Caco-2 (cell line): ENCODE measurements at regions of chr1 and their contacts with region 1.

Region 1: GRCh38 chr1:218345673-218346390 is 696 bp downstream of the TGFB2 start:
- DNase-seq: peak; percentile 63 to 66
- H3K4me3 ChIP-seq: peak overlapping the region; percentile 81
- H3K4me3 Mint-ChIP-seq: no peak overlapping the region
- H3K27ac Mint-ChIP-seq: no peak overlapping the region
- H3K4me1 ChIP-seq: peaks cover 14% of the 10 kb centered on the region
- H3K4me1 Mint-ChIP-seq: peaks cover 6% of the 10 kb centered on the region
- H3K27me3 ChIP-seq: no peaks in the 10 kb centered on the region
- H3K27me3 Mint-ChIP-seq: no peaks in the 10 kb centered on the region
- CTCF ChIP-seq: no peak

Region 2: GRCh38 chr1:218250492-218250891 is 95.3 kb before region 1 on chr1:
- CTCF ChIA-PET with region 1: no interaction called
- POLR2A ChIA-PET with region 1: no interaction called
- intact Hi-C with region 1: no loop called
- DNase-seq: no peak
- H3K4me3 ChIP-seq: no peak overlapping the region
- H3K4me3 Mint-ChIP-seq: no peak overlapping the region
- H3K27ac Mint-ChIP-seq: no peak overlapping the region
- H3K4me1 ChIP-seq: no peaks in the 10 kb centered on the region
- H3K4me1 Mint-ChIP-seq: no peaks in the 10 kb centered on the region
- H3K27me3 ChIP-seq: no peaks in the 10 kb centered on the region
- H3K27me3 Mint-ChIP-seq: peaks cover 23% of the 10 kb centered on the region
- CTCF ChIP-seq: no peak

Region 3: GRCh38 chr1:218299416-218299815 is 46.4 kb before region 1 on chr1:
- CTCF ChIA-PET with region 1: no interaction called
- POLR2A ChIA-PET with region 1: no interaction called
- intact Hi-C with region 1: loop called (anchors 5 kb)
- DNase-seq: peak in 1 of 2 experiments; percentile 37
- H3K4me3 ChIP-seq: no peak overlapping the region
- H3K4me3 Mint-ChIP-seq: no peak overlapping the region
- H3K27ac Mint-ChIP-seq: no peak overlapping the region
- H3K4me1 ChIP-seq: peaks cover 65% of the 10 kb centered on the region
- H3K4me1 Mint-ChIP-seq: peaks cover 36% of the 10 kb centered on the region
- H3K27me3 ChIP-seq: no peaks in the 10 kb centered on the region
- H3K27me3 Mint-ChIP-seq: no peaks in the 10 kb centered on the region
- CTCF ChIP-seq: peak; percentile 22 to 50

Region 4: GRCh38 chr1:218369688-218370511 is 24.1 kb after region 1 on chr1:
- CTCF ChIA-PET with region 1: no interaction called
- POLR2A ChIA-PET with region 1: interaction called, 4 read pairs
- intact Hi-C with region 1: loop called (anchors 1 kb)
- DNase-seq: peak in 1 of 2 experiments; percentile 27
- H3K4me3 ChIP-seq: no peak overlapping the region
- H3K4me3 Mint-ChIP-seq: peak overlapping the region; percentile 37
- H3K27ac Mint-ChIP-seq: peak overlapping the region; percentile 88
- H3K4me1 ChIP-seq: peaks cover 85% of the 10 kb centered on the region
- H3K4me1 Mint-ChIP-seq: peaks cover 29% of the 10 kb centered on the region
- H3K27me3 ChIP-seq: no peaks in the 10 kb centered on the region
- H3K27me3 Mint-ChIP-seq: no peaks in the 10 kb centered on the region
- CTCF ChIP-seq: no peak

Region 5: DNA sequence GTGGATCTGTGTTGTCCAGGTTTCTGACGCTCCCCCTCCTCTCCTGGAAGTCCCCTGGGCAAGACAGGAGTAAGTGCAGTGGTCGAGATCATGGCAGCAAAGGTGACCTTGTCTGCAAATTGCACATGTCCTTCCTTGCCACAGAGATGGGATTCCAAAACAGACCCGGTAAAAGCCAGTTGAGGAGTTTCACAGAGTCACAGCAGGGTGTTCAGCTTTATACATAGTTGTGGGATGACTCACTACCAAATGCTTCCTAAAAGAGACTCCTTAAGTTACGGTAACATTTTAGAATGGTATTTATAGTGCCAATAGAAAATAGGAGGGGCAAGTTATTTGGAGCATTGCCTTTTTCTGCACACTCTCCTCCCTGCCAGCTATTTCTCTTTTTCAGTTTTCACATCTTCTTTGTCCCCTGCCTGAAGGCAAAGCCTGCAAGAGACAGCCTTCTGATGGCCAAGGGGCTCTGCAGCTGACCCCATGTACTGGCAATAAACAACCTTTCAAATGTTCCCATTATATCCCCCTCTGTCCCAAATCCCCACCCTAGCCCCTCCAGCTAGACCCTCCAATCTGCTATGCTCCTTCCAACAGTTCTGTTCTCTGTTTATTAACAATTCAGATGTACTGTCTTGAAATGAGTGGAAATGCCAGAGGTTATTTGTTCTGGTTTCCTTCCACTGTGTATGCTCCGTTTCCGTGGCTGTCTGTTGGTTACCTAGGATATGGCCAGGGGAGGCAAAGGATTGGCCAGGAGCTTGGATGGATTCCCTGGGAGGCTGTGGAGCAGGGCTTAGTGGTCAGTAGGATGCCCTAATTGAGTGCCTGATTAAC is 114.3 kb after region 1 on chr1:
- CTCF ChIA-PET with region 1: no interaction called
- POLR2A ChIA-PET with region 1: no interaction called
- intact Hi-C with region 1: loop called (anchors 5 kb)
- DNase-seq: peak; percentile 35 to 45
- H3K4me3 ChIP-seq: no peak overlapping the region
- H3K4me3 Mint-ChIP-seq: peak overlapping the region; percentile 4
- H3K27ac Mint-ChIP-seq: peak overlapping the region; percentile 71
- H3K4me1 ChIP-seq: peaks cover 29% of the 10 kb centered on the region
- H3K4me1 Mint-ChIP-seq: peaks cover 35% of the 10 kb centered on the region
- H3K27me3 ChIP-seq: no peaks in the 10 kb centered on the region
- H3K27me3 Mint-ChIP-seq: no peaks in the 10 kb centered on the region
- CTCF ChIP-seq: no peak

Region 6: DNA sequence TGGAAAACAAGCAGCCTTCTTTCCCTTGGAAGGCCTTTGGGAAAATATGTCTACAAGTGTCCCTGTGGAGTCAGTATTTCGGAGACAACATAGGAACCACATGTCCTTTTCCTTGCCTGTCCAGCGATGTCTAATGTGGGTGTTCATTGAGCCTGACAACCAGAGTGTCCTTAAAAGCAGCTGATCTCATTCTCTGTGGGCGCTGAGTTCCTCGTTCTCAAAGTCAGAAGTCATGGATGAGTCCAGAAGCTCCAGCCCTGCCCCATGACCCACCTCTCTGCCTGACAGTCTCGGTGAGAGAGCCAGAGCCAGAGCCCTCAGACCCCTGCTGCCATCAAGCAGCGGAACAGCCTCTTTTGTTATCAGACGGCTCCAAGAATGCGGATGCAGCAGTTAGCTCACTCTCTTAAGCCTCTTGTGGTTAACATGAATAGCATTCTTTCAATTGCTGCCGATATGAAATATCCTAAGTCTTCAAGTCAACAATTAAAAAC is 328.5 kb after region 1 on chr1:
- CTCF ChIA-PET with region 1: no interaction called
- POLR2A ChIA-PET with region 1: no interaction called
- intact Hi-C with region 1: loop called (anchors 5 kb)
- DNase-seq: peak; percentile 72 to 82
- H3K4me3 ChIP-seq: no peak overlapping the region
- H3K4me3 Mint-ChIP-seq: peak overlapping the region; percentile 25
- H3K27ac Mint-ChIP-seq: peak overlapping the region; percentile 79
- H3K4me1 ChIP-seq: peaks cover 12% of the 10 kb centered on the region
- H3K4me1 Mint-ChIP-seq: peaks cover 8% of the 10 kb centered on the region
- H3K27me3 ChIP-seq: no peaks in the 10 kb centered on the region
- H3K27me3 Mint-ChIP-seq: no peaks in the 10 kb centered on the region
- CTCF ChIP-seq: peak in 1 of 2 experiments; percentile 29

Region 7: GRCh38 chr1:219173758-219174588 is 828.1 kb after region 1 on chr1 and contains the start of gene LYPLAL1:
- CTCF ChIA-PET with region 1: no interaction called
- POLR2A ChIA-PET with region 1: no interaction called
- intact Hi-C with region 1: loop called (anchors 5 kb)
- DNase-seq: peak; percentile 84 to 90
- H3K4me3 ChIP-seq: peak within 1 kb of the TSS; percentile 75
- H3K4me3 Mint-ChIP-seq: peak within 1 kb of the TSS; percentile 96
- H3K27ac Mint-ChIP-seq: peak within 1 kb of the TSS; percentile 94
- H3K4me1 ChIP-seq: 0 out of 2 replicates have a peak, but pooled peaks cover 4% of the 10 kb centered on the region
- H3K4me1 Mint-ChIP-seq: peaks cover 23% of the 10 kb centered on the region
- H3K27me3 ChIP-seq: no peaks in the 10 kb centered on the region
- H3K27me3 Mint-ChIP-seq: no peaks in the 10 kb centered on the region
- CTCF ChIP-seq: peak in 1 of 2 experiments; percentile 26
- total RNA-seq, gene LYPLAL1: 20.4 and 27.1 TPM in 2 replicates